ENCODE measurements at regions of chr10 and their contacts with region 1.

Region 1: GRCh38 chr10:69318106-69318866 is 40.0 kb downstream of the HK1 start:
- DNase-seq: peak; percentile 93
- H3K4me3 Mint-ChIP-seq: peak overlapping the region; percentile 98
- H3K27ac Mint-ChIP-seq: peak overlapping the region; percentile 93
- H3K4me1 Mint-ChIP-seq: peaks cover 46% of the 10 kb centered on the region
- H3K27me3 Mint-ChIP-seq: no peaks in the 10 kb centered on the region

Region 2: GRCh38 chr10:68988530-68989316 is 329.6 kb before region 1 on chr10 and contains the start of gene KIFBP:
- CTCF ChIA-PET with region 1: no interaction called
- intact Hi-C with region 1: loop called (anchors 2 kb)
- DNase-seq: peak; percentile 94
- H3K4me3 Mint-ChIP-seq: peak within 1 kb of the TSS; percentile 98
- H3K27ac Mint-ChIP-seq: peak within 1 kb of the TSS; percentile 92
- H3K4me1 Mint-ChIP-seq: peaks cover 44% of the 10 kb centered on the region
- H3K27me3 Mint-ChIP-seq: no peaks in the 10 kb centered on the region
- total RNA-seq, gene KIFBP: 10.1 to 10.6 TPM

Region 3: DNA sequence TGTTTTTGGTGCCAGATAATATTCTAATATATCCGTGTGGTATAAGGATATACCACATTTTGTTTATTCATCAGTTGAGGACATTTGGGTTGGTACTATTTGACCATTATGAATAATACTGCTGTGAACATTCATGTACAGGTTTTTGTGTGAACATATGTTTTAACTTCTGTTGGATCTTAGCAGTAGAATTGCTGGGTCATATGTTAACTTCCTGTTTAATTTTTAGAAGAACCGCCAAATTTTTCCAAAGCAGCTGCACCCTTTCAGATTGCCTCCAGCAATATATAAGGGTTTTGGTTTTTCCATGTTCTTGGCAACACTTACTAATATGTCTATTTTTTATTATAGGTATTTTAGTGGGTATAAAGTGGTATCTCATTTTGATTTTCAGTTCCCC is 171.5 kb before region 1 on chr10:
- CTCF ChIA-PET with region 1: no interaction called
- intact Hi-C with region 1: no loop called
- DNase-seq: no peak
- H3K4me3 Mint-ChIP-seq: no peak overlapping the region
- H3K27ac Mint-ChIP-seq: no peak overlapping the region
- H3K4me1 Mint-ChIP-seq: peaks cover 25% of the 10 kb centered on the region
- H3K27me3 Mint-ChIP-seq: no peaks in the 10 kb centered on the region

Region 4: GRCh38 chr10:69232252-69232651 is 86.0 kb before region 1 on chr10:
- CTCF ChIA-PET with region 1: interaction called, 4 read pairs
- intact Hi-C with region 1: loop called (anchors 2 kb)
- DNase-seq: no peak
- H3K4me3 Mint-ChIP-seq: no peak overlapping the region
- H3K27ac Mint-ChIP-seq: no peak overlapping the region
- H3K4me1 Mint-ChIP-seq: peaks cover 42% of the 10 kb centered on the region
- H3K27me3 Mint-ChIP-seq: no peaks in the 10 kb centered on the region

Region 5: GRCh38 chr10:69237528-69238159 is 80.6 kb before region 1 on chr10:
- CTCF ChIA-PET with region 1: interaction called, 4 read pairs
- intact Hi-C with region 1: loop called (anchors 2 kb)
- DNase-seq: peak; percentile 95
- H3K4me3 Mint-ChIP-seq: no peak overlapping the region
- H3K27ac Mint-ChIP-seq: no peak overlapping the region
- H3K4me1 Mint-ChIP-seq: peaks cover 24% of the 10 kb centered on the region
- H3K27me3 Mint-ChIP-seq: no peaks in the 10 kb centered on the region

Region 6: DNA sequence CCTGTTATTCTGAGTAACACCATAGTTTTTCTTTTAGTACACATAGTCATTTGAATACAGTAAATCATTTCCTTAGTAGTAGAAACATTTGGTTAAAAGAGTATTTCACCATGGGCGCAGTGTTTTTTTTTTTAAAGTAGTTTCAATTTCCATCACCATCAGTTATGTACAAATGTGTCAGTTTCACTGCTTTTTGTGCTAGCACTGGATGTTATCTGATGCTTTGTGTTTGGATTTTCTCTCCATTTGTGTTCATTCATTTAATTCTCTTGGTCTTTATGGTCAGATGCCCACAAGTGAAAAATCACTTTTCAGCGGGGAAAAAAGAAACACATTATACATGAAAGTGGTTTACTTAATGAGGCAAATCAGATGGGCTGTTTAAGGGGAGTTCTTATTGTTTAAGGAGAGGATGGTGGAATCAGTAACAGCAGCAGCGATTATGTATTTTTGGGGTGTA is 56.0 kb before region 1 on chr10:
- CTCF ChIA-PET with region 1: interaction called, 6 read pairs
- intact Hi-C with region 1: loop called (anchors 1 kb)
- DNase-seq: no peak
- H3K4me3 Mint-ChIP-seq: no peak overlapping the region
- H3K27ac Mint-ChIP-seq: peak overlapping the region; percentile 62
- H3K4me1 Mint-ChIP-seq: peaks cover 17% of the 10 kb centered on the region
- H3K27me3 Mint-ChIP-seq: no peaks in the 10 kb centered on the region

Region 7: DNA sequence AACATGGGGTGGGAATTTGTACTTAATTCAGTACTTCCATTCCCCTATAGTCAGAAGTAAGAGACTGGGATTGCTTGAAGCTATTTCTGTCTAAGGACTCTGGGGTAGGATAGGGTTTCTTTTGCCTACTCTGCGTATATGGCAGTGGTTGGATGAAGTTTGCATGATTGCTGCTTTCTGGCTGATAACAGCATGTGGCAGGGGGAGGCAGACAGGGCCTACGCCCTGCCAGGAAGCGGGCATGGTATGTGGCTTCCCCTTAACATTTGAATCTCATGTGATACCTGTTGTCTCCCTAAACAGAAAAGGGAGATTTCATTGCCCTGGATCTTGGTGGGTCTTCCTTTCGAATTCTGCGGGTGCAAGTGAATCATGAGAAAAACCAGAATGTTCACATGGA is 41.3 kb after region 1 on chr10:
- CTCF ChIA-PET with region 1: no interaction called
- intact Hi-C with region 1: loop called (anchors 5 kb)
- DNase-seq: peak; percentile 39
- H3K4me3 Mint-ChIP-seq: no peak overlapping the region
- H3K27ac Mint-ChIP-seq: peak overlapping the region; percentile 36
- H3K4me1 Mint-ChIP-seq: peaks cover 59% of the 10 kb centered on the region
- H3K27me3 Mint-ChIP-seq: no peaks in the 10 kb centered on the region

Region 8: DNA sequence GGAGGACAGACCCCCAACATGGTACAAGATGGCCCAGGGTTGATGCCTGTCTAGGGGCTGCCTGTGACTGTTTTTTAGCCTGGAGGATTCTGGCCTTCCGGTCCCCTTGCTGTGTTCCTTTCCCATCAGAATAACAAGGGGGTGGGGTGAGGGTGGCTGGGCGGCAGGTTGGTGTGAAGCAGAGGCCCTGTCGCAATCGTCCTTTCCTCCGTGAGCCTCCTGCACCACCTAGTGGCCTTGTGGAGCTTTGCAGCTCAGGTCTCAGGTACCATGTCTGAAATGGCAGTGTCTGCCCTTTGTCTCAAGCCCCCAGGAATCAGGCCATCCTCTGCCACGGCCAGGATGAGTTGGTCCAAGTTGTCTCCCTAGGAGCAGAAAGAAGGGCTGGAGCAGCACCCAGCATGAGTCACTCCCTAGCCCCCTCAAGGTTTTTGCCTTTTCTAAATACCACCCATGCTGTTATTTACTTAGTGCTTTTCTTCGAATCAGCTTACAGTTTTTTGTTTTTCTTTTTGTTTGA is 74.3 kb after region 1 on chr10:
- CTCF ChIA-PET with region 1: interaction called, 3 read pairs
- intact Hi-C with region 1: loop called (anchors 5 kb)
- DNase-seq: peak; percentile 92
- H3K4me3 Mint-ChIP-seq: no peak overlapping the region
- H3K27ac Mint-ChIP-seq: peak overlapping the region; percentile 76
- H3K4me1 Mint-ChIP-seq: peaks cover 23% of the 10 kb centered on the region
- H3K27me3 Mint-ChIP-seq: no peaks in the 10 kb centered on the region